B cell (primary cell): ENCODE measurements at regions of chr19 and their contacts with region 1.

Region 1: GRCh38 chr19:17305517-17306284 is at the start of gene MRPL34:
- DNase-seq: peak; percentile 100
- ATAC-seq: peak; percentile 69
- H3K4me3 ChIP-seq: peak within 1 kb of the TSS; percentile 49 to 74 (median 73)
- H3K4me3 Mint-ChIP-seq: peak within 1 kb of the TSS; percentile 91
- H3K27ac ChIP-seq: peak within 1 kb of the TSS; percentile 70 to 71
- H3K27ac Mint-ChIP-seq: peak within 1 kb of the TSS; percentile 90
- H3K4me1 ChIP-seq: peaks cover 38 to 56% of the 10 kb centered on the region in 2 donors
- H3K4me1 Mint-ChIP-seq: peaks cover 56% of the 10 kb centered on the region
- H3K27me3 ChIP-seq: no peaks in the 10 kb centered on the region
- H3K27me3 Mint-ChIP-seq: no peaks in the 10 kb centered on the region
- CTCF ChIP-seq: peak; percentile 76
- total RNA-seq, gene MRPL34: 40.7 and 45.7 TPM in 2 replicates

Region 2: GRCh38 chr19:16429066-16429758 is 876.5 kb before region 1 on chr19:
- CTCF ChIA-PET with region 1: no interaction called
- POLR2A ChIA-PET with region 1: no interaction called
- intact Hi-C with region 1: no loop called
- DNase-seq: no peak
- ATAC-seq: no peak
- H3K4me3 ChIP-seq: no peak overlapping the region
- H3K4me3 Mint-ChIP-seq: no peak overlapping the region
- H3K27ac ChIP-seq: no peak overlapping the region
- H3K27ac Mint-ChIP-seq: peak overlapping the region; percentile 41
- H3K4me1 ChIP-seq: no peaks in the 10 kb centered on the region
- H3K4me1 Mint-ChIP-seq: no peaks in the 10 kb centered on the region
- H3K27me3 ChIP-seq: no peaks in the 10 kb centered on the region
- H3K27me3 Mint-ChIP-seq: no peaks in the 10 kb centered on the region
- CTCF ChIP-seq: no peak

Region 3: DNA sequence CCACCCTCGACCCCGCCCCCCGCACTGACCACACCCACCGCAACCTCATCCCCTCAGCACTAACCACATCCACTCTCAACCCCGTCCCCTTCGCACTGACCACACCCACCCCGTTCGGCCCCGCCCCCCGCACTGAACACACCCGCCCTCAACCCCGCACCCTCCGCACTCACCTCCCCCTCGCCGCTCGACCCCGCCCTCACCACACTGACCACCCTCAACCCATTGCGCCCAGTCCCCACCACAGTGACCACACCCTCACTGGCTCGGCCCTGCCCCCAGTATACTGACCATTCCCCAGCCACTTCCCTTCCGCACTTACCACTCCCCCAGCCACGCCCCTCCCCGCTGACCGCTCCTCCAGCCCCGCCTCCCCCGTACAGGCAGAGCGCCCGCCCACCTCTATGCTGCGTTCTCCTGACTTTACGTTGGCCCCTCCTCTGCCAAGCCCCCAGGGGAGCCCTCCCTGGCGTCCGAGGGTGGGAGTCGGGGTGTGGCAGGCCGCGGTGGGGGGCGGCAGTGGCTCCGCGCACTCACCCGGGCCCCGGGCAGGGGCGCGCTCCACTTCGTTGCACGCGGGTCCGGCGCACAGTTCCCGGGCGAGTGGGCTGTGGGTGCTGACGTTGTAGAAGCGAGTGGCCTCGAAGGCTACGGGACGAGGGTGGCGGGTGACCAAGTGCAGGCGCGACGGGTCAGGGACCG is 408.4 kb before region 1 on chr19:
- CTCF ChIA-PET with region 1: no interaction called
- POLR2A ChIA-PET with region 1: no interaction called
- intact Hi-C with region 1: loop called (anchors 10 kb)
- DNase-seq: peak; percentile 85
- ATAC-seq: peak; percentile 68
- H3K4me3 ChIP-seq: peak overlapping the region in 4 of 5 experiments; percentile 47 to 84 (median 65)
- H3K4me3 Mint-ChIP-seq: peak overlapping the region; percentile 88
- H3K27ac ChIP-seq: no peak overlapping the region
- H3K27ac Mint-ChIP-seq: peak overlapping the region; percentile 46
- H3K4me1 ChIP-seq: peaks cover 35 to 51% of the 10 kb centered on the region in 2 donors
- H3K4me1 Mint-ChIP-seq: peaks cover 39% of the 10 kb centered on the region
- H3K27me3 ChIP-seq: peaks cover 0 to 11% (median 2%) of the 10 kb centered on the region in 4 experiments
- H3K27me3 Mint-ChIP-seq: no peaks in the 10 kb centered on the region
- CTCF ChIP-seq: no peak

Region 4: DNA sequence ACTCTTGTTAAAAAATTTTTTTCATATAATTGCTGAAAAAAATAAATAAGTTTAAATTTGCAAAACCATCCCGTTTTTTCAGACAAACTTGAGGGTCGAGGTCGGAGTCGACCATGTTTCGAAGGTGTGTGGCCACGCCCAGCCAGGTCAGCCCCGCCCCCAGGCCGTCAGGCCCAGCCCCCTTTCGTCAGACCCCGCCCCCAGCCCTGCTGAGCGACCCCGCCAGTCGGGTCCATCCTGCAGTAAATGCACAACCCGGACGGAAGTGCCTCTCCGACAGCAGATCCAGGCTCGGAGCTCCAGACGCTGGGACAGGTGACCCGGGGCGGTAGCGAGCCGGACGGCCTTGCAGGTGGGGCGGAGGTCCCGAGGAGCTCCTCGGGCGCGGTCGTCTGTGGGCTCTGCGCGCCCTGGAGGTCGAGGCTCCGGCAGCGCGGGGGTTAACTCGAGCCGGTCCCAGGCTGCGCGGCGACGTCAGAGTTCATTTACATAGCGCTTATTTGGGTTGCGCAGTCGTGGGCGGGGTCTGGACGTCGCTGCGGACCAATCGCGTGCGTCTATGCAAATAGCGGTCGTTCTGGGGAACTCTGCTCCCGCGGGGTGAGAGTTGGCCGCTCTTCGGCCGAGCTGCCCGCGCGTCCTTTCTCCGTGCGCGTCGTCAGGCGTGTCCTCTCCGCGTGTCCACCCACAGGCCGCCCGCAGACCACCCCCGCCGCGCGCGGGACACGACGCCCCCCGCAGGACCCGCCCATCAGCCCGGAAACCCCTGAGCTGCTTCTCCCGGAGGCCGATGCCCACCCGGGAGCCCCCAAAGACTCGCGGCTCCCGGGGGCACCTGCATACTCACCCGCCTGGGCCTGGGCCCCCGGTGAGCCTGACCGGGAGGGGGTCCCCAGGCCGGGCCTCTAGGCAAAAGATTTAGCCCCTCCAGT is 79.4 kb before region 1 on chr19 and contains the start of gene OCEL1:
- CTCF ChIA-PET with region 1: no interaction called
- POLR2A ChIA-PET with region 1: interaction called, 10 read pairs
- intact Hi-C with region 1: loop called (anchors 1 kb)
- DNase-seq: peak; percentile 99
- ATAC-seq: peak; percentile 90
- H3K4me3 ChIP-seq: peak within 1 kb of the TSS; percentile 74 to 81 (median 79)
- H3K4me3 Mint-ChIP-seq: peak within 1 kb of the TSS; percentile 90
- H3K27ac ChIP-seq: peak within 1 kb of the TSS; percentile 75 to 80
- H3K27ac Mint-ChIP-seq: peak within 1 kb of the TSS; percentile 94
- H3K4me1 ChIP-seq: peaks cover 3 to 20% of the 10 kb centered on the region in 2 donors
- H3K4me1 Mint-ChIP-seq: peaks cover 12% of the 10 kb centered on the region
- H3K27me3 ChIP-seq: no peaks in the 10 kb centered on the region
- H3K27me3 Mint-ChIP-seq: no peaks in the 10 kb centered on the region
- CTCF ChIP-seq: no peak
- total RNA-seq, gene OCEL1: 30.5 and 40.4 TPM in 2 replicates

Region 5: DNA sequence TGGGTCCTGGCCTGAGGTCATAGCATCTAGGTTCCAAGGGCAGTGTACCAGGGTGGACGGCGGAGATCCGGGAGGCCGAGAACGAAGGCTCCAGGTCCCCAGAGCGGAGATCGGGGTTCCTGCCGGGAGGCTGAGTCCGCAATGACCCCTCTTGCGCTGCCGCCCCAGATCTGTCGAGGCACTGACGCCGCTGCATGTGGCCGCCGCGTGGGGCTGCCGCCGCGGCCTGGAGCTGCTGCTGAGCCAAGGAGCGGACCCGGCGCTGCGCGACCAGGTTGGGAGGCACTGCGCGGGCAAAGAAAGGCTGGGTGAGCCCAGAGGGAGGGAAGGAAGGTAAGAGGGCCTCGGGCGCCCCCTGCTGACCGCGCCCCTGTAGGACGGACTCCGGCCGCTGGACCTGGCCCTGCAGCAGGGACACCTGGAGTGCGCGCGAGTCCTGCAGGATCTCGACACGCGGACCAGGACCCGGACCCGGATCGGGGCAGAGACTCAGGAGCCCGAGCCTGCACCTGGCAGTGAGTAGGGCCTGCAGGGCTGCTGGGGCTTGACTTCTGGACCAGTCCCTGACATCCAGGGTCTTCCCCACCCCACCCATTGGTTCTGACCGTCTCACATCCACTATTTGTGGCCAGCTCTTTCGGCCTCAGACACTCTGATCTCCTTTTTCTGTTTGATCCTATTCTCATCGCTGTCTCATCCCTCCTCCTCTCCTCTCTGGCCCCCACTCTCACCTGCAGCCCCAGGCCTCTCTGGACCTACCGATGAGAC is 23.0 kb before region 1 on chr19:
- CTCF ChIA-PET with region 1: interaction called, 9 read pairs
- POLR2A ChIA-PET with region 1: interaction called, 12 read pairs
- intact Hi-C with region 1: no loop called
- DNase-seq: peak; percentile 88
- ATAC-seq: peak; percentile 84
- H3K4me3 ChIP-seq: peak overlapping the region; percentile 48 to 92 (median 66)
- H3K4me3 Mint-ChIP-seq: peak overlapping the region; percentile 93
- H3K27ac ChIP-seq: no peak overlapping the region
- H3K27ac Mint-ChIP-seq: peak overlapping the region; percentile 63
- H3K4me1 ChIP-seq: peaks cover 5 to 21% of the 10 kb centered on the region in 2 donors
- H3K4me1 Mint-ChIP-seq: peaks cover 8% of the 10 kb centered on the region
- H3K27me3 ChIP-seq: no peaks in the 10 kb centered on the region
- H3K27me3 Mint-ChIP-seq: no peaks in the 10 kb centered on the region
- CTCF ChIP-seq: peak; percentile 92

Region 6: DNA sequence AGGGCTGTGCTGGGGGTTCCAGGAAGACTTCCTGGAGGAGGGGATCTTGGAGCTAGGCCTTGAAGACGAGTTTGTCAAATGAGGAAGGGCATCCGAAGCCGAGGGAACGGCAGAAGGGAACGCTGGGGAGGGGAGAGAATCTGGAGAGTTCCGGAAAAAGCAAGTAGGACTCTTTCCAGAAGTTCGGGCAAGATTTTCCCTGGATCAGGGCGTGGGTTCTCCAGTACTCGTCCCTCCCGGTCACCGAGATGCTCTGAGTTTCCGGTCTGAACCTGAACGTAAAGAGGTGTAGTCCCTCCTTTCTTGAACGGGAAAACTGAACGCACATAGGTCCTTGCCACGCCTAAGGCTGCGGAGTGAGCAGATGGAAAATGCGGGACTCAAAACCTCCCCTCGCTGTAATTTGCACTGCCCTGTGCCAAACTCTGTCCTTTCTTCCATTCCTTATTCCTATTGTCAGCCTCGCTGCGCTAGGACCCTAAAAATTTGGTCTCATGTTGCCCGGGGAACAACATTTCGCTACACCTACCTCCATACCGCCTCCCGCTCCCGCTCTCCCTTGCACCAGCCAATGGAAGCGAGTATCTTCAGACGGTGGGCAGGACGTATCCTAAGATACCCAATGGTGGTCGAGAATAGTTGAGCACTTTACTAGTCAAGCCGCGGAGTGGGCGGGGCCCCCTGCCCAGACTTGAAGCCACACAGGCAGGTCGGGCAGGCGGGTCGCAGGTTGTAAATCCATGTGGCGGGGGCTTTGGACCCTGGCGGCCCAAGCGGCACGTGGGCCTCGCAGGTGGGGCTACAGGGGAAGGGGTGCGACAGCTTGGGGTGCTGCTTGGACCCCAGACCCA is 31.4 kb after region 1 on chr19 and contains the start of gene GTPBP3:
- CTCF ChIA-PET with region 1: interaction called, 4 read pairs
- POLR2A ChIA-PET with region 1: interaction called, 4 read pairs
- intact Hi-C with region 1: loop called (anchors 1 kb)
- DNase-seq: peak; percentile 97
- ATAC-seq: peak; percentile 88
- H3K4me3 ChIP-seq: peak within 1 kb of the TSS; percentile 55 to 97 (median 85)
- H3K4me3 Mint-ChIP-seq: peak within 1 kb of the TSS; percentile 92
- H3K27ac ChIP-seq: peak within 1 kb of the TSS; percentile 39 to 85
- H3K27ac Mint-ChIP-seq: peak within 1 kb of the TSS; percentile 92
- H3K4me1 ChIP-seq: peaks cover 19 to 33% of the 10 kb centered on the region in 2 donors
- H3K4me1 Mint-ChIP-seq: peaks cover 40% of the 10 kb centered on the region
- H3K27me3 ChIP-seq: peaks cover 0 to 6% (median 0%) of the 10 kb centered on the region in 4 experiments
- H3K27me3 Mint-ChIP-seq: no peaks in the 10 kb centered on the region
- CTCF ChIP-seq: no peak
- total RNA-seq, gene GTPBP3: 44.3 and 44.9 TPM in 2 replicates

Region 7: DNA sequence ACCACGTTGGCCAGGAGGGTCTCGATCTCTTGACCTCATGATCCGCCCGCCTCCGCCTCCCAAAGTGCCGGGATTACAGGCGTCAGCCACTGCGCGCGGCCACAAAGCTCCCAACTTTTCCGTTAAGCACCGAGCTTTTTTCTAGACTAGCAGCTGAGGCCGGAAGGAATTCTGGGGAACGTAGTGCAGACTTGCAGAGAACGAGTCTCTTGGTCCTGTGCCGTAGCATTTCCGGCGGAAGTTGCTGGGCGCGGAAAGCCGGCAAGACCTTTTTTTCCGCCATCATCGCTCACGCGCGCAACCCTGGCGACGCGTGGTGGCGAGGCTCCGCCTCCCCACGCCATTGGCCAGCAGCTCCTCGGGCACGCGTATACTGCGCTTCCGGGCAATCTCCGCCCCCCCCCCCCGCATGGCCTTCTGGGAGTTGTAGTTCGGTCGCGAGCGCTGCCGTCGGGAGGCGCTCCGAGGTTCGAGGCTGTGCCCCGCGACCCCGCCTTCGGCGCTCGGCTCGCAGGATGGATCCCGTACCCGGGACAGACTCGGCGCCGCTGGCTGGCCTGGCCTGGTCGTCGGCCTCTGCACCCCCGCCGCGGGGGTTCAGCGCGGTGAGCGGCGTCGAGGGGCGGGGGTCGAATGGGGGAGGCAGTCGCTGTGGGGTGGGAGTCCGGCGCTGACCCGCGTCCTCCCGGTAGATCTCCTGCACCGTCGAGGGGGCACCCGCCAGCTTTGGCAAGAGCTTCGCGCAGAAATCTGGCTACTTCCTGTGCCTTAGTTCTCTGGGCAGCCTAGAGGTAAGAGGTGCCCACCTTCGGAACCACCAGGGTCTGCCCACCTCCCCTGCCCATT is 114.1 kb after region 1 on chr19 and contains the start of gene MVB12A:
- CTCF ChIA-PET with region 1: no interaction called
- POLR2A ChIA-PET with region 1: interaction called, 3 read pairs
- intact Hi-C with region 1: loop called (anchors 1 kb)
- DNase-seq: peak; percentile 98
- ATAC-seq: peak; percentile 97
- H3K4me3 ChIP-seq: peak within 1 kb of the TSS; percentile 71 to 89 (median 76)
- H3K4me3 Mint-ChIP-seq: peak within 1 kb of the TSS; percentile 96
- H3K27ac ChIP-seq: peak within 1 kb of the TSS; percentile 33 to 60
- H3K27ac Mint-ChIP-seq: peak within 1 kb of the TSS; percentile 93
- H3K4me1 ChIP-seq: peaks cover 12 to 16% of the 10 kb centered on the region in 2 donors
- H3K4me1 Mint-ChIP-seq: peaks cover 15% of the 10 kb centered on the region
- H3K27me3 ChIP-seq: no peaks in the 10 kb centered on the region
- H3K27me3 Mint-ChIP-seq: no peaks in the 10 kb centered on the region
- CTCF ChIP-seq: no peak
- total RNA-seq, gene MVB12A: 26.8 and 33.6 TPM in 2 replicates

Region 8: DNA sequence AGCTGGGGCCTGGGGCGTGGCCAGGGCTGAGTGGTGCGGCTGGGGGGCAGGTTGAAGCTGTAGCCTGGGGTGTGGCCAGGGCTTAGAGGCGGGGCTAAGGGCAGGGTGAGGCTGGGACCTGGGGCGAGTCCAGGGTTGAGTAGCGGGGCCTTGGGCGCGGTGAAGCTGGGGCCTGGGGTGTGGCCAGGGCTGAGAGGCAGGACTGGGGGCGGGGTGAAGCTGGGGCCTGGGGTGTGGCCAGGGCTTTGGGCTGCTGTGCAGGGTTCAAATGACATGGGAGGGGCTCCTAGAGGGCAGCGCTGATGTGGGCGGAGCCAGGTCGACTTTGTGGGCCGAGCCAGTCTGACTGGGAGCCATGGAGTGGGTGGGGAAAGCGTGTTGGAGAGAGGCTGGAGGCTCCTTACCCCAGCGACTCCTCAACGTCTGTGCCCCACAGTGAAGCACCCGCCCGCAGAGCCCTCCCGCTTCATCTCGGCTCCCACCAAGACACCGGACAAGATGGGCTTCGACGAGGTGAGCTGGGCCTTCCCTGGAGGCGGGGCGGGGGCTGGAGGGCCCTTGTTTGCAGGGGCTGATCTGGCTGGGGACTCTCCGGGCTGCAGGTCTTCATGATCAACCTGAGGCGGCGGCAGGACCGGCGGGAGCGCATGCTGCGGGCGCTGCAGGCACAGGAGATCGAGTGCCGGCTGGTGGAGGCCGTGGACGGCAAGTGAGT is 271.2 kb after region 1 on chr19:
- CTCF ChIA-PET with region 1: no interaction called
- POLR2A ChIA-PET with region 1: no interaction called
- intact Hi-C with region 1: no loop called
- DNase-seq: no peak
- ATAC-seq: no peak
- H3K4me3 ChIP-seq: no peak overlapping the region
- H3K4me3 Mint-ChIP-seq: no peak overlapping the region
- H3K27ac ChIP-seq: no peak overlapping the region
- H3K27ac Mint-ChIP-seq: no peak overlapping the region
- H3K4me1 ChIP-seq: no peaks in the 10 kb centered on the region
- H3K4me1 Mint-ChIP-seq: peaks cover 13% of the 10 kb centered on the region
- H3K27me3 ChIP-seq: no peaks in the 10 kb centered on the region
- H3K27me3 Mint-ChIP-seq: no peaks in the 10 kb centered on the region
- CTCF ChIP-seq: no peak